ENCODE measurements at regions of chr16 and their contacts with region 1.

Region 1: GRCh38 chr16:85563515-85564276 is 49.4 kb upstream of the GSE1 start:
- DNase-seq: no peak
- ATAC-seq: no peak
- H3K4me3 ChIP-seq: no peak overlapping the region
- H3K4me3 Mint-ChIP-seq: no peak overlapping the region
- H3K27ac ChIP-seq: no peak overlapping the region
- H3K27ac Mint-ChIP-seq: peak overlapping the region; percentile 79 to 81
- H3K4me1 ChIP-seq: peaks cover 0 to 79% of the 10 kb centered on the region in 2 experiments
- H3K4me1 Mint-ChIP-seq: peaks cover 37 to 61% (median 42%) of the 10 kb centered on the region in 3 donors
- H3K27me3 ChIP-seq: no peaks in the 10 kb centered on the region
- H3K27me3 Mint-ChIP-seq: no peaks in the 10 kb centered on the region

Region 2: DNA sequence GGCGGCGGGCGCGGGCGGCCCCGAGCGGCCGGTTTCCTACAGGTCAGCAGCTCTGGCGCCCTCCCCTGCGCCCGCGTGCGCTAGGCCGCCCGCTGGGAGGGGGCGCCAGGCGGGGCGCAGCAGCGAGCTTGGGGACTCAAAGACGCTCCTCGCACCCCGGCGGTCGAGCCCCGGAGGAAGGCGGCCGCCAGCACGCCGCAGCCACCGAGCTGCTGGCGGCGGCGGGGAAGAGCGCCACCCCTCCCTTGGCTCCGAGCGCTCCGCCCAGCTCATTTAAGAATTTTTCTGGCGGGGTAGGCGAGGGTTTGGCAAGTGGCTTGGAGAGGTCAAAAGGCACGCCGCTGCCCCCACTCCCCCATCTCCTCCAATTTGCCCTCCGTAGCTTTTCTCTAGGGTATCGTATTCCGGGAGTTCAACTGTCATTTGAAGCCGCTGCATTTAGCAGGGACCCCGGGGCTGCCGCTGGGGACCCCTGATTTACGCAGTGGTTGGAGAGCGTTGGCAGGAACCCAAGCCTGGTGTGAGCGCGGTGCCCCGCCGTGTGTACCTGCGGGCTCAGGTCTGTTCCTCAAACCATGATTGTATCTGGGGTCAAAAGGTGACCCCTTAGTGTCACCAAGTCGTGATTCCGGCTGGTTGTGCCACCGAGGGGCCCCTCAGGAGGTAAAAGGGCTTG is 10.1 kb before region 1 on chr16:
- CTCF ChIA-PET with region 1: interaction called, 3 read pairs
- POLR2A ChIA-PET with region 1: interaction called in 1 of 2 experiments, 19 read pairs
- DNase-seq: peak in 26 of 35 experiments; percentile 16 to 75 (median 41)
- ATAC-seq: peak; percentile 17 to 38 (median 30)
- H3K4me3 ChIP-seq: peak overlapping the region; percentile 66 to 96
- H3K4me3 Mint-ChIP-seq: peak overlapping the region; percentile 87 to 93 (median 89)
- H3K27ac ChIP-seq: peak overlapping the region; percentile 92
- H3K27ac Mint-ChIP-seq: peak overlapping the region; percentile 83 to 94
- H3K4me1 ChIP-seq: peaks cover 6 to 32% of the 10 kb centered on the region in 2 experiments
- H3K4me1 Mint-ChIP-seq: peaks cover 29 to 33% (median 33%) of the 10 kb centered on the region in 3 donors
- H3K27me3 ChIP-seq: no peaks in the 10 kb centered on the region
- H3K27me3 Mint-ChIP-seq: no peaks in the 10 kb centered on the region